ENCODE measurements at regions of chr1 and their contacts with region 1.

Region 1: DNA sequence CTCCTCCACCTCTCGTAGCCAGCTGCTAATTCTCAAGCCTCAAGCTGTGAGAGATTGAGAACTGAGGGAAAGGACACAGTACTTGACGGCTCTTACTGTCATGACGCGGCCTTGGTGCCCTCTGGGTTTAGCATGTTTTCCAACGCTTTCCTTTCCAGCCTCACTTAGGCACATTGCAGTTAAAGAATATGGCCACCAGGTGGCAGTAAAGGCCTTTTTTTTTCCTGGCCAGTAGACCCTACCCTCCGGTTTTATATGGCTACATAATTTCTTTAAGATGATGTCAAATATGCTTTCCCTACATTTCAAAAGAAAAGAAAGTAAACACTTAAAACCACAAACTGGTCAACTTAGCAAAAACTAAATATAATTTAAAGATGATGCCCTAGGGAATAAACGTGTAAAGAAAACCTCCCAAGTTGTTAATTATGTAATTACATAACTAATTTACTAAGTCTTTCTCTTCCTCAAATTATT is 56.8 kb upstream of the PRDX6 start:
- DNase-seq: no peak
- H3K4me3 ChIP-seq: no peak overlapping the region
- H3K27ac ChIP-seq: peak overlapping the region in 2 of 8 donors; percentile 30 to 35
- H3K4me1 ChIP-seq: peaks cover 3 to 64% (median 23%) of the 10 kb centered on the region in 6 donors
- H3K27me3 ChIP-seq: no peaks in the 10 kb centered on the region
- CTCF ChIP-seq: peak; percentile 83 to 95 (median 93)
- POLR2A ChIP-seq: no peak

Region 2: DNA sequence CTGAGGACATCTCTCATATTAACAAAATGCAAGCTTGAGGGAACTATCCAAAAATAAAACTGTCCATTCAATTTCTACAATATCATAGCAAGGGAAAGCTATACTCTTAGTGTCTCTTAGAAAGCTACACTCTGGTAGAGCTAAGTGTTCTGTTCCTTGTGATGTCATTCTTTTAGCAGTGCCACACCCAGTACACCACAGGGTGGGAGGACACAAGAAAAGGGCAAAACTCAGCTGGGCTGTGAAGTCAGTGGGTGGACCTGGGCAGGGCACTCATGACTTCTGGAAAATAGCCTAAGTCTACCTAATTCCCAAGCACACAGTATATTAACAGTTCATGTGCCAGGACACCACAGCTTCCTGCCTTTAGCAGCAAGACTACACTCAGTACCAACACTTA is 171.0 kb before region 1 on chr1:
- intact Hi-C with region 1: no loop called
- DNase-seq: no peak
- H3K4me3 ChIP-seq: no peak overlapping the region
- H3K27ac ChIP-seq: no peak overlapping the region
- H3K4me1 ChIP-seq: no peaks in the 10 kb centered on the region
- H3K27me3 ChIP-seq: no peaks in the 10 kb centered on the region
- CTCF ChIP-seq: no peak
- POLR2A ChIP-seq: no peak

Region 3: DNA sequence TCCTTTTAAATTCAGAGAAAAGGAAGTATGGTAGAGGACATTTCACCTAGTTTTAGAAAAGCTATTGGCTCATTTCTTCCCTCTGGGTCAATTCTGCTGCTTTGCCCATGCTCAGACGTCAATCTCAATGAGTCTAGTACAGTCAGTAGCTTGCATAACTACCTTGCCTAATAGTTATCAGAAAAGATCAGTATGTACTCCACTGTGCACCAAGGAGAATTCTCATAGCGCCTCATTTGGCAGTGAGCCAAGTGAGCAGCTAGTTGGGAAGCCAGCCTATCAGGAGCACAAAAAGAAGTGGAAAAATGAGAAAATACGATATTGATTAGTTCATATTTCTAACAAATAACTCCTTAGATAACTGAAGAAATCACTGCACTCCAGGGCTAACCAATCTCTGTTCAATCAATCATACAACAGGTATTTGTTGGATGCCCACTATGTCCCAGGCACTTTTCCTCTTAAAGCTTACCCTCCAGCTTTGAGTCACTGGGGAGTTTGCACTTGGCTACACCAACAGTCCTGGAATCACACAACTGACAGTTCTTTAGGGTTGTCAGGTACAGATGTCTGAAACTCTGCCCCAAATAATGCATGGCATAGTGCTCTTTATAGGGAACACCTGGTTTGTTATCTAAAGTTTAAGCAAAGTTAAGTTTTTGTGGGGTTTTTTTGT is 106.9 kb after region 1 on chr1:
- intact Hi-C with region 1: no loop called
- DNase-seq: no peak
- H3K4me3 ChIP-seq: no peak overlapping the region
- H3K27ac ChIP-seq: no peak overlapping the region
- H3K4me1 ChIP-seq: peaks cover 0 to 6% (median 2%) of the 10 kb centered on the region in 6 donors
- H3K27me3 ChIP-seq: no peaks in the 10 kb centered on the region
- CTCF ChIP-seq: no peak
- POLR2A ChIP-seq: no peak

Region 4: DNA sequence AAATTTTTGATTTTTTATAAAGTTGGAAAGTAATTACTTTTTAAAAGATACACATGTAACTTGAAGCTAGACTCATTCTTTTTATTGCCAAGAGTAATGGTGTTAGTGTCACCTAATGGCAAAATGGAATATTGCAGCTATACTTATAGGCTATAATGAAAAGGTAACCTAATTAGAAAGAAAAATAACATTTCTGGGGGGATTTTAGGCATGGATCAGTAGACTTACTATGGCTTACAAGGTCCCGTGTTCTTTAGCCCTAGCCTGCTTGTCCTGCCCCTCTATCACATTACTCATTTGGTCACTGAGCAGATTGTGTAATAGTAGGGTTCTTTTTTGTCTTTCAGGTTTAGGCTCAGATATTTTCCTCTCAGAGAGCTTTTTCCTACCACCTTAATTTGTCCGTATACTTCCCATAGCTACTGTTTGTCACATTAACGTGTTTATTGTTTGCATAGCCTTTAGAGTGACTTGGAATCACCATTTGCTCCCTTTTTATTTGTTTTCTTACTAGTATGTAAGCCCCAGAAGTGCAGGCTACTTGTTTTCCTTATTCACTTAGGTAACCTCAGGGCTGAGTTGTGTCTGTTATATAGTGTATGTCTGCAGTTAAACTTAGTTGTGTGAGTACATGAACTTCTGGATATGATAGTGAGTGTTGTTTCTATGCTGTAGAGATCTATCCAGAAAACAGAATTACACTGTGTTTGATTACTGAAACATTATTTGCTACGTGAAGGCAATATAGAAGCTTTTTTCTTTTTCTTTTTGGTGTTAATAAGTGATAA is 797.6 kb after region 1 on chr1:
- intact Hi-C with region 1: loop called (anchors 5 kb)
- DNase-seq: no peak
- H3K4me3 ChIP-seq: no peak overlapping the region
- H3K27ac ChIP-seq: peak overlapping the region in 1 of 8 donors; percentile 8
- H3K4me1 ChIP-seq: peaks cover 0 to 44% (median 6%) of the 10 kb centered on the region in 6 donors
- H3K27me3 ChIP-seq: no peaks in the 10 kb centered on the region
- CTCF ChIP-seq: peak; percentile 23 to 75 (median 68)
- POLR2A ChIP-seq: no peak

Measured in spleen (tissue), 13 donors.